ENCODE measurements at regions of chr22 and their contacts with region 1.

Region 1: DNA sequence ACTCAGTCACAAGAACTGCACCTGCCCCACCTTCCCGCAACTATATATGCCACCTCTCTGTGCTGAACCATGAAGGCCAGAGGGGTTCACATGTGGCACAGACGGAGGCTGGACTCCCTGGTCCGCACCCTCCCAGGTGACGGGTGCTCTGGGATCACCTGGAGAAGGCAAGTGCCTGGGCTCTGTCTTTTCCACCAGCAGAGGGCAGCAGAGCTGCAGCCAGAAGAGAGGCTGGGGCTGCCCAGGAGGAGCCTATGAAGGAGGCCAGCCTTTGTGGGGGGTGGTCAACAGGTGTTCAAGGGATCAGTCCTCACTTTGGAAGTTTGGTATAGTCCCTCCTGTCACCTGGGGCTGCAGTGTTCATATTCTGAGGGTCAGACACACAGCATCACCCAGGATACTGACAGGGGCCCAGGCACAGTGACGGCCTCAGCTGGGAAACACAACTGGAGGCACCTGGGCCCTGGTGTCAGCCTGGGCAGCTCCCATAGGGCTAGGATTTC is 39.2 kb upstream of the IGLL5 start:
- DNase-seq: peak; percentile 63
- H3K4me3 ChIP-seq: peak overlapping the region in 1 of 2 experiments; percentile 31; a peak in 1 of 4 replicates
- H3K27ac ChIP-seq: no peak overlapping the region
- H3K4me1 ChIP-seq: no peaks in the 10 kb centered on the region
- H3K27me3 ChIP-seq: no peaks in the 10 kb centered on the region; the same call in 1 of the 2 replicates
- CTCF ChIP-seq: peak; percentile 93
- EP300 ChIP-seq: no peak
- RAD21 ChIP-seq: peak; percentile 78

Region 2: GRCh38 chr22:22753526-22754267 is 94.7 kb before region 1 on chr22:
- CTCF ChIA-PET with region 1: interaction called, 14 read pairs
- POLR2A ChIA-PET with region 1: no interaction called
- DNase-seq: peak; percentile 79
- H3K4me3 ChIP-seq: peak overlapping the region in 1 of 2 experiments; percentile 35; a peak in 1 of 4 replicates
- H3K27ac ChIP-seq: no peak overlapping the region
- H3K4me1 ChIP-seq: no peaks in the 10 kb centered on the region
- H3K27me3 ChIP-seq: 0 out of 2 replicates have a peak, but pooled peaks cover 4% of the 10 kb centered on the region
- CTCF ChIP-seq: peak; percentile 60
- EP300 ChIP-seq: no peak
- RAD21 ChIP-seq: peak; percentile 63

Region 3: GRCh38 chr22:22787786-22788459 is 60.5 kb before region 1 on chr22:
- CTCF ChIA-PET with region 1: interaction called, 26 read pairs
- POLR2A ChIA-PET with region 1: no interaction called
- DNase-seq: peak; percentile 66
- H3K4me3 ChIP-seq: peak overlapping the region in 1 of 2 experiments; percentile 31; a peak in 1 of 4 replicates
- H3K27ac ChIP-seq: no peak overlapping the region
- H3K4me1 ChIP-seq: no peaks in the 10 kb centered on the region
- H3K27me3 ChIP-seq: no peaks in the 10 kb centered on the region
- CTCF ChIP-seq: peak; percentile 79
- EP300 ChIP-seq: no peak
- RAD21 ChIP-seq: peak; percentile 55

Region 4: GRCh38 chr22:22865311-22866072 is 17.1 kb after region 1 on chr22:
- CTCF ChIA-PET with region 1: interaction called, 19 read pairs
- POLR2A ChIA-PET with region 1: no interaction called
- DNase-seq: no peak
- H3K4me3 ChIP-seq: no peak overlapping the region
- H3K27ac ChIP-seq: no peak overlapping the region
- H3K4me1 ChIP-seq: no peaks in the 10 kb centered on the region
- H3K27me3 ChIP-seq: no peaks in the 10 kb centered on the region
- CTCF ChIP-seq: no peak
- EP300 ChIP-seq: no peak
- RAD21 ChIP-seq: no peak

Region 5: DNA sequence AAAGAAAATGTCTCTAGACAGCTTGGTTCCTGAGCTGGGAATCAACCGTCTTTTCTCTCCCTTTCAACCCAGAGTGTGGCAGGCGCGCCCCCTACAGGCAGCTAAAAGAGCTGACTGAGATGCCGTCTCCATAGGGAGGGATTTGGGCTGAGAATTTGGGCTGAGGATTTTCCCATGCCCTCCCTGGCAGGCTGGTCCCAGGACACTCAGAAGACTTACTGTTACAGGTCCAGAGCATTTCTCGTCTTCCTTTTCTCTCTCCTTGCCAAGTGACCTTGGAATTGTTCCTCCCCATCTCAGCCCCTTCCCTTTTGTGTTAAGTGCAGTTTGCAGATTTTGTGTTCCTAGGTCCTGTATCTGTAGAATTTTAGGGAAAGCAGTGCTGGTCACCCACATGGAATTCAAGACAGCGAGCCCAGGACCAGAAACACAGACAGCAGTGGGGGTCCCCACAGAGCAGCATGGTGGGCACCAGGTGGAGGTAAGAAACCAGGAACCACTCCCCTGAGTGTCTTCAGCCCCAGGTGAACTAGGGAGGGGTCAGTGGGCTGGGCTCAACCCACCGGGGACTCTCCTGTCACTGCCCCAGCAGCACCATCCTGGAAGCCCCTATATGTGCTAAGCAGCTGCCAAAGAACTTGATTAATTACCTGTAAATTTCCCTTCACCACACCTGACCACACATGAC is 29.3 kb after region 1 on chr22:
- CTCF ChIA-PET with region 1: interaction called, 344 read pairs
- POLR2A ChIA-PET with region 1: interaction called, 4 read pairs
- DNase-seq: peak; percentile 67
- H3K4me3 ChIP-seq: no peak overlapping the region
- H3K27ac ChIP-seq: no peak overlapping the region
- H3K4me1 ChIP-seq: peaks cover 0 to 33% of the 10 kb centered on the region in 2 experiments; a peak in 2 of 4 replicates
- H3K27me3 ChIP-seq: no peaks in the 10 kb centered on the region
- CTCF ChIP-seq: peak; percentile 67
- EP300 ChIP-seq: no peak
- RAD21 ChIP-seq: peak; percentile 79

Region 6: DNA sequence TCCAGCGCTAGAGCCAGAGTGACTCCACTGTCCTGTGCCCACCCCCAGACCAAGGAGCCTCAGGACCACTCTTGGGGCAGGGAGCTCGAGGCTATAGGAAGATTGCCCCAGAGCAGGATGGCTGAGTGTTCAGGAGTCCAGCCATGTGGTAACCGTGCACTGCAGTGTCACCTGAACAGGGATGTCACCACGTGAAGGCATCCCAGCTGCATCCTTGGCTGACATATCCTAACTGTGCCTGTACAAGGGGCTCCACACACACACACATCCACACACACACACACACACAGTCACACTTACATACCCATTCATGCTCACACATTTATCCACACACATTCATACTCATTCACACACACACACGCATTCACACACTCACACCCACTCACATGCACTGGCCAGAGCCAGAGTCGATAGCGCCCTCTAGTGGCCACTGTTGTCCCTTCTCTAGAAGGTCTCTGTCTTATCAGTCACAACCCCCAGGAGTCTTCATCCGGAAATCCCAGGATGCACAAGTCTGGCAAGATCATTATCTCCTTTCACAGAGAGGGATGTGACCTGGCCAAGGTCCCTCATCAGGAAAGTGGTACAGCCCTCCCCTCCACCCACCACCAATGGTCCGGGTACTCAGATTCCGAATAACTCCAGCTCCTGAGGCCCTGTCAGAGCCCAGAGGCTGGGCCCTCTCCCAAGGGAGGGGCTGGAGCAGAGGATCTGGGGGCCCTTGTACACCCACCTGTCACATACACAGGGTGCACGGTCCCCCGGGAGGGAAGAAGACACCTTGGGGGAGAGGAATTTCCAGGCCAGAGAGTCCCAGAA is 94.3 kb after region 1 on chr22:
- CTCF ChIA-PET with region 1: interaction called, 34 read pairs
- POLR2A ChIA-PET with region 1: no interaction called
- DNase-seq: peak; percentile 80
- H3K4me3 ChIP-seq: no peak overlapping the region; a peak in 1 of 4 replicates
- H3K27ac ChIP-seq: no peak overlapping the region
- H3K4me1 ChIP-seq: peaks cover 0 to 8% of the 10 kb centered on the region in 2 experiments; a peak in 1 of 4 replicates
- H3K27me3 ChIP-seq: no peaks in the 10 kb centered on the region
- CTCF ChIP-seq: peak; percentile 74
- EP300 ChIP-seq: no peak
- RAD21 ChIP-seq: peak; percentile 60

Measured in SK-N-SH (cell line).